AG04450 (cell line): ENCODE measurements at regions of chr6 and their contacts with region 1.

Region 1: GRCh38 chr6:110341663-110342596 is 16.2 kb downstream of the METTL24 start:
- DNase-seq: no peak
- H3K4me3 ChIP-seq: no peak overlapping the region
- H3K27ac ChIP-seq: no peak overlapping the region
- H3K27me3 ChIP-seq: peaks cover 2% of the 10 kb centered on the region
- CTCF ChIP-seq: peak; percentile 58

Region 2: GRCh38 chr6:109991201-109992101 is 350.5 kb before region 1 on chr6:
- CTCF ChIA-PET with region 1: no interaction called
- POLR2A ChIA-PET with region 1: no interaction called
- DNase-seq: no peak
- H3K4me3 ChIP-seq: no peak overlapping the region
- H3K27ac ChIP-seq: no peak overlapping the region
- H3K27me3 ChIP-seq: peaks cover 2% of the 10 kb centered on the region
- CTCF ChIP-seq: no peak

Region 3: GRCh38 chr6:110226261-110226660 is 115.7 kb before region 1 on chr6:
- CTCF ChIA-PET with region 1: no interaction called
- POLR2A ChIA-PET with region 1: no interaction called
- DNase-seq: no peak
- H3K4me3 ChIP-seq: no peak overlapping the region
- H3K27ac ChIP-seq: no peak overlapping the region
- H3K27me3 ChIP-seq: no peaks in the 10 kb centered on the region
- CTCF ChIP-seq: no peak

Region 4: DNA sequence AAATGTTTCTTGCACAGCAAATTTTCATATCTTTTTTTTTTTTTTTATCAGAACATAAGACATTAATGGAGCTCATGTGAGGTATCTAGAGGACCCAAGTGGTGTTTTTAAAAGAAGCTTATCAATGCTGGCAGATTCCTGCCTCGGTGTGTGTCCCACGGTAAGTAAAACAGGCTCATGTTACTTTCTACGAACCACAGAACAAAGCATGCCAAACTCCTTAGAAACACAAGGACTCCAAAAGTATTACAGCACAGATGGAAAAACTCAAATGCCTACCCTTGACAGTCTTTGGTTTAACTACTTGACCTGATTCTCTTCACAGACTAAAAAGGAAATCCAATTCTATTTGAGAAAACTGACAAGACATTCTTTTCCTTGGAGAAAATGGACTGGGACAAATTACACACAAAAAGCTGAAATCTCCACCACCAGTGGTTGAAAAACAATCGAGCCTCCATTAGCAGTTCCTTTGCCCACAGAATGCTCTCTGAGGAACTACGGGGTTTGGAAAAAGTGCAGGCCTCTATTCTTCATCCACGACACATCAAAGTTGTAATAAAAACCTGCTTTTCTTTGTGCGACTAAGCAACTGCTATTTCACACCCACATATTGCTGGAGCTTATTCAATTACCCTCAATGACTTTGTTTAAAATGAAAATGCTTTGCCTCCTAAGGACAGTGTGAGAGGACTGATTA is 10.8 kb after region 1 on chr6:
- CTCF ChIA-PET with region 1: interaction called, 25 read pairs
- POLR2A ChIA-PET with region 1: no interaction called
- DNase-seq: no peak
- H3K4me3 ChIP-seq: no peak overlapping the region
- H3K27ac ChIP-seq: no peak overlapping the region
- H3K27me3 ChIP-seq: peaks cover 29% of the 10 kb centered on the region
- CTCF ChIP-seq: no peak

Region 5: DNA sequence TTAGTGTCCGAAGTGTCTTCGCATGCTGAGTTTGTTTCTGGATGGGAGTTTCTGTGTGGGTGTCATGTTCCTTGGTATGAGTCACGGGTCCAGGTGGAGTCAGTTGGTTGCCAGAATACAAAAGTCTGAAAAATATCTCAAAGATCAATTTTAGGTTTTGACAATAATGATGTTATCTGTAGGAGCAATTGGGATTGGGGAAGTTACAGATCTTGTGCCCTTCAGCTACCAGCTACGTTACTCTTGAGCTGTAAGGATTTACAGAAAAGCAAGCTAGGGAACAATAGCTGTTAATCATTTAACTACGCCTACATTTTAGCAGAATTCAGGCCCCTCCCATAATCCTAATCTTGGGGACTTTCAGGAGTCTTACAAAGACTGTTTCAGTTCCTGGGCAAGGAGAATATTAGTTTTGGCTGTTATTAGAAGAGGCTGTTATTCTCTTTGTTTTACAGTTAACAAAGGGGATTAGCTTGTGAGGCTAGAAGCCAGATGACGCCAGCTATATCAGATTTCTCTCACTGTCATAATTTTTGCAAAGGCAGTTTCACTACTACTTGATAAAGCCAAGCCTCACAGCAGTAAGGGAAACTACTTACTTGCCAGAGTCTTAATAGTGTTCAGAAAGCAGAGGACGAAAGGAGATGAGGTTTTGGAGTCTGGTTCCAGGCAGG is 149.9 kb after region 1 on chr6:
- CTCF ChIA-PET with region 1: no interaction called
- POLR2A ChIA-PET with region 1: no interaction called
- DNase-seq: no peak
- H3K4me3 ChIP-seq: no peak overlapping the region
- H3K27ac ChIP-seq: peak overlapping the region; percentile 39
- H3K27me3 ChIP-seq: peaks cover 2% of the 10 kb centered on the region
- CTCF ChIP-seq: no peak

Region 6: GRCh38 chr6:110990840-110991576 is 649.1 kb after region 1 on chr6:
- CTCF ChIA-PET with region 1: no interaction called
- POLR2A ChIA-PET with region 1: no interaction called
- DNase-seq: no peak
- H3K4me3 ChIP-seq: no peak overlapping the region
- H3K27ac ChIP-seq: no peak overlapping the region
- H3K27me3 ChIP-seq: no peaks in the 10 kb centered on the region
- CTCF ChIP-seq: no peak